ENCODE measurements at regions of chr7 and their contacts with region 1.

Region 1: GRCh38 chr7:37414352-37414983 is 34.2 kb downstream of the ELMO1 start:
- DNase-seq: no peak
- H3K4me3 ChIP-seq: no peak overlapping the region
- H3K27ac ChIP-seq: no peak overlapping the region
- H3K4me1 ChIP-seq: no peaks in the 10 kb centered on the region
- H3K27me3 ChIP-seq: peaks cover 32% of the 10 kb centered on the region
- CTCF ChIP-seq: no peak

Region 2: DNA sequence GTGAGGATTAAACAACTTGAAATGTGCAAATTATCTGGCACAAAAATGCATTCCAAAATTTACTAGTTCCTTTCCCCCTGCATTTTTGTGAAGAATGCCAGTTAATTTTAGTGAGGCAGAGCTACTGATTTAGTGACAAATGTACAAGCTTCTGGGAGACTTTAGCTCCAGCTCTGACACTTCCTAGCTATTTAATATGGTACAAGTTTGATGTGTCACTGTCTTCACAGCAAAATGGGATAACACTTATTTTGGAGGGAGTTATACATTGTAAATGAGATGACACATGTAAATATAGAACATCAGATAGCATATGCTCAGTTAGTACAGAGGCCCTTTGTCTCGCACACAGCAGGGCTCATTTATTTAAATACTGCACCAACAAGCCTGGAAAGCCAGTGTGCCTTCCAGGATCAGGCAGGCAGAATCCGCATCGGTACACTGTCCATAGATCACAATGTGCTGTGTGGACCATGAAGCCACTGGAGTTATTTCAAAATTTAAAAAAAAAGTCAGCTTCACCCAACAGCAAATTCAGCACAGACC is 14.5 kb before region 1 on chr7:
- CTCF ChIA-PET with region 1: no interaction called
- POLR2A ChIA-PET with region 1: no interaction called
- intact Hi-C with region 1: no loop called
- DNase-seq: no peak
- H3K4me3 ChIP-seq: no peak overlapping the region
- H3K27ac ChIP-seq: no peak overlapping the region
- H3K4me1 ChIP-seq: no peaks in the 10 kb centered on the region
- H3K27me3 ChIP-seq: no peaks in the 10 kb centered on the region; the same call in 1 of the 2 replicates
- CTCF ChIP-seq: no peak

Region 3: GRCh38 chr7:37853474-37853873 is 439.0 kb after region 1 on chr7:
- CTCF ChIA-PET with region 1: no interaction called
- POLR2A ChIA-PET with region 1: interaction called, 11 read pairs
- intact Hi-C with region 1: no loop called
- DNase-seq: peak in 1 of 2 experiments; percentile 40
- H3K4me3 ChIP-seq: no peak overlapping the region
- H3K27ac ChIP-seq: no peak overlapping the region
- H3K4me1 ChIP-seq: no peaks in the 10 kb centered on the region
- H3K27me3 ChIP-seq: peaks cover 9% of the 10 kb centered on the region; the same call in 1 of the 2 replicates
- CTCF ChIP-seq: peak; percentile 65

Measured in PC-9 (cell line).